ENCODE measurements at regions of chr12 and their contacts with region 1.

Region 1: GRCh38 chr12:112409064-112409905 is at the start of gene RPL6:
- DNase-seq: peak; percentile 88
- H3K4me3 Mint-ChIP-seq: peak within 1 kb of the TSS; percentile 100
- H3K27ac Mint-ChIP-seq: peak within 1 kb of the TSS; percentile 100
- H3K4me1 Mint-ChIP-seq: peaks cover 43% of the 10 kb centered on the region
- H3K27me3 Mint-ChIP-seq: no peaks in the 10 kb centered on the region
- total RNA-seq, gene RPL6: 2,358 to 2,432 TPM

Region 2: GRCh38 chr12:111841750-111842555 is 567.3 kb before region 1 on chr12 and contains the start of gene MAPKAPK5:
- CTCF ChIA-PET with region 1: interaction called, 3 read pairs
- intact Hi-C with region 1: loop called (anchors 2 kb)
- DNase-seq: peak; percentile 97
- H3K4me3 Mint-ChIP-seq: peak within 1 kb of the TSS; percentile 91
- H3K27ac Mint-ChIP-seq: peak within 1 kb of the TSS; percentile 95
- H3K4me1 Mint-ChIP-seq: peaks cover 54% of the 10 kb centered on the region
- H3K27me3 Mint-ChIP-seq: no peaks in the 10 kb centered on the region
- total RNA-seq, gene MAPKAPK5: 41.9 to 43.6 TPM

Region 3: DNA sequence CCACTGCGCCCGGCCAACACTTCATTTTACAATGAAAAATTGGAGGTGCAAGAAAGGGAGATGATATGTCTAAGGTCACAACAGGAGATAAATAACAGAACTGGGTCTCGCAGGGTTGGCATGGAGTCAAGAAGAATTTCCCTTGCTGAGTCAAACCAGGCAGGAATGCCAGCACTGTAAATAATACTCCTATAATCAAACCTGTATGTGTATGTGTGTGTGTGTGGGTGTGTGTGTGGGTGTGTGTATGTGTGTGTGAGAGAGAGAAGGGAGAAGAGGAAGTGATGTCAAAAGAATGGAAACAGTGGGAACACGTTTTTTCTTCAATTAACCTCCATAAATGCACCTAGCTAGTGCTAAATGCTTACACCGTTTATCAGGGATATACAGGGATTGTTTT is 466.7 kb before region 1 on chr12:
- CTCF ChIA-PET with region 1: no interaction called
- intact Hi-C with region 1: loop called (anchors 2 kb)
- DNase-seq: no peak
- H3K4me3 Mint-ChIP-seq: no peak overlapping the region
- H3K27ac Mint-ChIP-seq: no peak overlapping the region
- H3K4me1 Mint-ChIP-seq: peaks cover 12% of the 10 kb centered on the region
- H3K27me3 Mint-ChIP-seq: no peaks in the 10 kb centered on the region

Region 4: GRCh38 chr12:112108201-112109079 is 300.8 kb before region 1 on chr12 and contains the start of gene NAA25:
- CTCF ChIA-PET with region 1: interaction called, 3 read pairs
- intact Hi-C with region 1: loop called (anchors 5 kb)
- DNase-seq: peak; percentile 87
- H3K4me3 Mint-ChIP-seq: peak within 1 kb of the TSS; percentile 96
- H3K27ac Mint-ChIP-seq: peak within 1 kb of the TSS; percentile 99
- H3K4me1 Mint-ChIP-seq: peaks cover 64% of the 10 kb centered on the region
- H3K27me3 Mint-ChIP-seq: no peaks in the 10 kb centered on the region
- total RNA-seq, gene NAA25: 52.4 to 55.7 TPM

Region 5: DNA sequence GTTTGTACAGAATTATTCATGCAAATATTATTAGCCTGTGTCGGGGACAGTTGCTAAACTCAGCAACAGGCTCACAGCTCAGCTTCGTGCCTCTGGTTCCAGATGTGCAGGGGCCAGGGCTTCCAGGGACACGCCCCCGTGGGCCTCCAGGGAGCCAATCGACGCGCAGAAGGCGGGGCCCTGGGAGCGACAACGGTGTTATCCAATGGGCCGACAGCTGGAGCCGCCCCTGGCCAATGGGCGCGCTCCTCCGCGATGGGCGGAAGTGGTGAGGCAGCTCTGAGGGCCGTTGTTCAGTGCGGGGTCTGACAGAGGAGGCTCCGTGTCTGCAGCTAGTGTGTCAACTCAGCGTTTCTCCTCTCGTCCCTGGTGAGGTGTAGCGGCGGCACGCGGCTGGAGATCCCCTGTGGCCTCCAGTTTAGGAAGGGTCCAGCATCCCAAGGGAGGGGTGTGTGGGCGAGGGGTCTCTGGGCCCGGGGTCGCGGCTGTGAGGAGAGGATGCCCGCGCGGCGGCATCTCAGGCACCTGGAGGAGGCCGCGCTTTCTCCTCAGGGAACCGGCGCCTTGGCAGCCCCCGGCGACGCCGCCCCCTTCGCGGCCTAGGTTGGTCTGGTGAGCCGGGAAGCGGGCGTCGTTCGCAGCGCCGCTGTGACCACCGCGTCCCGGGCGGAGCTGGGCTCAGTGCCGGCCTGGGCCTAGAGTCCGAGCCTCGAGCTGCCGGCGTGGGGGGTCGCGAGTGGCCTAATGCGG is 283.9 kb before region 1 on chr12 and contains the start of gene TRAFD1:
- CTCF ChIA-PET with region 1: no interaction called
- intact Hi-C with region 1: loop called (anchors 1 kb)
- DNase-seq: peak; percentile 98
- H3K4me3 Mint-ChIP-seq: peak within 1 kb of the TSS; percentile 72
- H3K27ac Mint-ChIP-seq: peak within 1 kb of the TSS; percentile 75
- H3K4me1 Mint-ChIP-seq: peaks cover 42% of the 10 kb centered on the region
- H3K27me3 Mint-ChIP-seq: no peaks in the 10 kb centered on the region
- total RNA-seq, gene TRAFD1: 49.6 to 55.7 TPM

Region 6: DNA sequence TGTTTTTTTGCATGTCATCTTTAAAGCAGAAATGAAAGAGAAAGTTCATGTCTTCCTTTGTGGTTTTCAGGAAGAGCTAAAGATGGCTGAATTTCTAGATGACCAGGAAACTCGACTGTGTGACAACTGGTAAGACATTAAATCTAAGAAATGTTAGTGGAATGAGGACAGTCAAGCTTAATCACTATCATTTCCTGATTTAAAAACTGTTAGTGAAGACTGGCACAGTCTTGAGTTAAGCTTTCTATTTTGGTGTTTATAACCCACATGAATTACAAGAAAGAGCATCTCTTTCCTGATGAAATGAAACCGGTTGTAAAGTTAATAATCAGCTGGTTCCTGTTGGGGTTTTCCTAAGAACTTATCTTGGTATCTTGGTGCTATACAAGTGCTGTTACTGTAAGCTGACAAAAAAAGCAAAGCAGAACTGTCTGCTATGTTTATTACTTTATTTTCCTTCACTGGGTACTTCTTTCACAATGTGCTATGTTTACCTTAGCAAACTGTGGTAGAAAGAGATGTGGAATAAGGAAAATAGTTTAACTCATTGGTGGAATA is 278.8 kb before region 1 on chr12:
- CTCF ChIA-PET with region 1: no interaction called
- intact Hi-C with region 1: loop called (anchors 1 kb)
- DNase-seq: no peak
- H3K4me3 Mint-ChIP-seq: peak overlapping the region; percentile 42
- H3K27ac Mint-ChIP-seq: peak overlapping the region; percentile 88
- H3K4me1 Mint-ChIP-seq: peaks cover 54% of the 10 kb centered on the region
- H3K27me3 Mint-ChIP-seq: no peaks in the 10 kb centered on the region

Region 7: GRCh38 chr12:112198120-112198733 is 211.1 kb before region 1 on chr12:
- CTCF ChIA-PET with region 1: interaction called, 12 read pairs
- intact Hi-C with region 1: loop called (anchors 1 kb)
- DNase-seq: peak; percentile 80
- H3K4me3 Mint-ChIP-seq: no peak overlapping the region
- H3K27ac Mint-ChIP-seq: no peak overlapping the region
- H3K4me1 Mint-ChIP-seq: no peaks in the 10 kb centered on the region
- H3K27me3 Mint-ChIP-seq: no peaks in the 10 kb centered on the region

Measured in activated naive CD4-positive, alpha-beta T cell treated with anti-CD3 and anti-CD28 coated beads for 36 hours (primary cell).